Psoas muscle (tissue), 8 donors: ENCODE measurements at regions of chr6 and their contacts with region 1.

Region 1: DNA sequence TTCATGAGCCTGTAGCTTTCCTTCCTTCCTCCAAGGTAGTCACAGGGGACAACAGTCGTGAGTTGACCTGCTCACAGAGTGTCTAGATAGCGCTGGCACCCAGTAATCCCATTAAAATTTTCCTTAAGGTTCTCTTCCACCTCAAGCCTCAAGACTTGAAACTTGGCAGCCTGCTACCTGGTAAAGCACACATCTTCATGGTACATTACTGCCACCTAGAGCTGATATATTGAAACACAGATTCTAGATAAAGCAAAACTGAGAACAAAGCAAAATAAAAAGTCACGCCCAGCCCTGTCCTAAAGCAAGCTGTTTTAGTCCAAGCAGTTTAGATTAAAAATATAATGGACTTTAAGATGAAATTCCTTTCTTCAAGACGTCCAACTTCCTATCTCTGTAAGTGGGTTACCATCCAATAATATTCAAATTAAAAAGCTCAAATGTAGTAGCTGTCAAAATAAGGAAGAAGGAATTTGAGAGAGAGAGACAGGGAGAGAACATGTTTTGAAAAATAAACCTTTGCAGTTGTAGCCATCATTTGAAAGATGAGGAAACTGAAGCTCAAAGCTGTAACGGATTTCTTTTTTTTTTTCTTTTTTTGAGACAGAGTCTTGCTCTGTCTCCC is 50.7 kb upstream of the CD83 start:
- DNase-seq: no peak
- ATAC-seq: peak; percentile 67 to 84 (median 78)
- H3K4me3 ChIP-seq: no peak overlapping the region
- H3K27ac ChIP-seq: no peak overlapping the region
- H3K4me1 ChIP-seq: no peaks in the 10 kb centered on the region
- H3K27me3 ChIP-seq: peaks cover 0 to 4% (median 4%) of the 10 kb centered on the region in 3 donors
- CTCF ChIP-seq: peak; percentile 70

Region 2: DNA sequence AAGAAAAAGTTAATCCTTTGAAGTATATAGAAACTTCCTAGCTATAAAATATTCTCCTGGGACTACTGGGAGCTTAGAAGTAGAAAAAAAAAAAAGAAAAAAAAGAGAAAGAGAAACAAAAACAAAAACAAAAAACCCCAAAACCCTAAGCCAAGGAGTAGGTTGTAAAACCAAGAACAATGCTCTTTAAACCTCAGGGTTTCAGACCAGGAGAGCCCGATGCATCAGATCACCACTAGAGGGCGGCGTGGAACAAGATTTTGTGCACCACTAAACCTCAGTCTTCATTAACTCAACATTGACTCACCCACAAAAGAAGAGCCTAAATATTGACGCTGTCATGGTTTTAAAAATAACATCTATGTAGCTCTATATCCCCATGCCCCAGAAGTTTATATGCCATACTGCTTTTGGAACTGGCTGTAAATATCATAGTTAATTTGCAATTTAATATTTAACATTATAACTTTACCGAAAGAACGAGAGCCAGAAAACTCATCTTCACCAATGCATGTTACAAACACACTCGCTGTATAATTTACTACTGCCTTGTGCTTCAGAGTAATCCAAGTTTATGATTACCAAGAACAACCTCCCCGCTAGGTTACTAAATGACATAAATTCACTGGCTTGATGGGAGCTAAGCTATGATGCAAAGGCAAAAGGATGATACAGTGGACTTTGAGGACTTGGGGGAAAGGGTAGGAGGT is 271.7 kb before region 1 on chr6:
- intact Hi-C with region 1: loop called (anchors 1 to 5 kb)
- DNase-seq: peak; percentile 76 to 89
- ATAC-seq: peak; percentile 94 to 99 (median 96)
- H3K4me3 ChIP-seq: no peak overlapping the region
- H3K27ac ChIP-seq: peak overlapping the region; percentile 46
- H3K4me1 ChIP-seq: peaks cover 3% of the 10 kb centered on the region
- H3K27me3 ChIP-seq: no peaks in the 10 kb centered on the region
- CTCF ChIP-seq: peak; percentile 92